ENCODE measurements at regions of chr15 and their contacts with region 1.

Region 1: DNA sequence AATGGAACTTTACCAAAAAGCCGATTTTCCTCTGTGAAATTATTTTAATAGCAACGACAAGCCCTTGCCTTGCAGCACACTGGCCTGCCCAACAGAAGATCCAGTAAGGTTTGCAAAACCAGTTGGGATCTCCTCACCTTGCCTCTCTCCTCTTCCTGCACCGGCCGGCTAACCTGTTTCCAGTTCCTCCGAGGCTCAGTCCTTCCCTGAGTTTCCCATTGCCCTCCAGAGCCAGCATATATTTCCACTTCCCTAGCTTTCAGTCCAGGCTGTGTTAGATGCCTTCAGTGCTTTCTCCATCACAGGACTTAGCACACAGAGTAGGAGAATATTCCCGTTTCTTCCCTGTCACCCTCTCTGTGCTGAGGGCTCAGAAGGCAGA is 60.3 kb downstream of the NOX5 start:
- DNase-seq: no peak
- ATAC-seq: no peak
- H3K4me3 ChIP-seq: peak overlapping the region; percentile 66
- H3K27ac ChIP-seq: no peak overlapping the region
- H3K4me1 ChIP-seq: no peaks in the 10 kb centered on the region
- H3K27me3 ChIP-seq: peaks cover 0 to 12% (median 2%) of the 10 kb centered on the region in 3 donors
- CTCF ChIP-seq: no peak

Region 2: GRCh38 chr15:68739390-68740080 is 335.3 kb before region 1 on chr15:
- intact Hi-C with region 1: no loop called
- DNase-seq: no peak
- ATAC-seq: no peak
- H3K4me3 ChIP-seq: no peak overlapping the region
- H3K27ac ChIP-seq: no peak overlapping the region
- H3K4me1 ChIP-seq: no peaks in the 10 kb centered on the region
- H3K27me3 ChIP-seq: no peaks in the 10 kb centered on the region
- CTCF ChIP-seq: no peak

Region 3: DNA sequence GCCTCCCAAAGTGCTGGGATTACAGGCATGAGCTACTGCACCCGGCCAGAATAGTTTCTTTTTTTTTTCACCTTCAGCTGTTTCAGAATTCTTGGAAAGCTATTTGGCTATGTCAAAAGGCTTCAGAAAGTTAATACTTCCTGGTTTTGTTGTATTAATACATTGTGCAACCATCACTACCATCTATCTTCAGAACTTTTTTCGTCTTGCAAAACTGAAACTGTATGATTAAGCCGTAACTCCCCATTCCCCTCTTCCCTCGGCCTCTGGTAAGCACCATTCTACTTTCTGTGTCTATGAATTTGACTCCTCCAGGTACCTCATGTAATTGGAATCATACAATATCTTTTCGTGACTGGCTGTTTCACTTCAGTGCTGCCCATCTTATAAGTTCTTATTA is 65.5 kb before region 1 on chr15:
- intact Hi-C with region 1: no loop called
- DNase-seq: no peak
- ATAC-seq: no peak
- H3K4me3 ChIP-seq: no peak overlapping the region
- H3K27ac ChIP-seq: no peak overlapping the region
- H3K4me1 ChIP-seq: no peaks in the 10 kb centered on the region
- H3K27me3 ChIP-seq: no peaks in the 10 kb centered on the region
- CTCF ChIP-seq: no peak

Region 4: GRCh38 chr15:69160141-69160993 is 85.5 kb after region 1 on chr15 and contains the start of gene GLCE:
- intact Hi-C with region 1: loop called in 1 of 2 experiments (anchors 5 kb)
- DNase-seq: peak; percentile 96 to 97
- ATAC-seq: peak; percentile 99
- H3K4me3 ChIP-seq: peak within 1 kb of the TSS; percentile 96
- H3K27ac ChIP-seq: peak within 1 kb of the TSS; percentile 76
- H3K4me1 ChIP-seq: peaks cover 10% of the 10 kb centered on the region
- H3K27me3 ChIP-seq: no peaks in the 10 kb centered on the region
- CTCF ChIP-seq: no peak
- total RNA-seq, gene GLCE: 2.5 to 5.2 (median 3.4) TPM

Measured in psoas muscle (tissue), 8 donors.